ENCODE measurements at regions of chr17 and their contacts with region 1.

Region 1: DNA sequence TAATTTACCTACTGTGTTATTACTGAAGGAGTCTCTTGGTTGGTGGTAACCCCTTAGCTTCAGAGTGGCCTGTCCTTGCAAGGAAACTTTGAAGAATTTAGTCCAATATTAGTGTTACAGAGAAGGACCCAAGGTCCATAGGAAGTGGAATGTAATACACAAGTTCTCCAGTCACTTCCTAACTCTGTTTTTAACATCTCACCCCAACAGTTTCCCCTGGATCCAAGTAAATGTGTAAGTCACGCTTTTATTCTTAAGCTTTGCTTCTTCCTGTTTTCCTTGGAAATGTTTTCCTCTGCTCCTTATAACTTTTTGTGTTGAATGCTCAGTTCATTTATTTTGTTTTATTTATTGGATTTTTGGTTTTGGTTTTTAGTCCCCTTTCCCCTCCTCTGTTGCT is 25.9 kb upstream of the RPRML start:
- DNase-seq: no peak
- ATAC-seq: no peak
- H3K4me3 ChIP-seq: no peak overlapping the region
- H3K4me3 Mint-ChIP-seq: no peak overlapping the region
- H3K27ac ChIP-seq: no peak overlapping the region
- H3K27ac Mint-ChIP-seq: no peak overlapping the region
- H3K4me1 ChIP-seq: no peaks in the 10 kb centered on the region
- H3K4me1 Mint-ChIP-seq: peaks cover 0 to 10% (median 6%) of the 10 kb centered on the region in 7 donors
- H3K27me3 ChIP-seq: no peaks in the 10 kb centered on the region
- H3K27me3 Mint-ChIP-seq: no peaks in the 10 kb centered on the region

Region 2: DNA sequence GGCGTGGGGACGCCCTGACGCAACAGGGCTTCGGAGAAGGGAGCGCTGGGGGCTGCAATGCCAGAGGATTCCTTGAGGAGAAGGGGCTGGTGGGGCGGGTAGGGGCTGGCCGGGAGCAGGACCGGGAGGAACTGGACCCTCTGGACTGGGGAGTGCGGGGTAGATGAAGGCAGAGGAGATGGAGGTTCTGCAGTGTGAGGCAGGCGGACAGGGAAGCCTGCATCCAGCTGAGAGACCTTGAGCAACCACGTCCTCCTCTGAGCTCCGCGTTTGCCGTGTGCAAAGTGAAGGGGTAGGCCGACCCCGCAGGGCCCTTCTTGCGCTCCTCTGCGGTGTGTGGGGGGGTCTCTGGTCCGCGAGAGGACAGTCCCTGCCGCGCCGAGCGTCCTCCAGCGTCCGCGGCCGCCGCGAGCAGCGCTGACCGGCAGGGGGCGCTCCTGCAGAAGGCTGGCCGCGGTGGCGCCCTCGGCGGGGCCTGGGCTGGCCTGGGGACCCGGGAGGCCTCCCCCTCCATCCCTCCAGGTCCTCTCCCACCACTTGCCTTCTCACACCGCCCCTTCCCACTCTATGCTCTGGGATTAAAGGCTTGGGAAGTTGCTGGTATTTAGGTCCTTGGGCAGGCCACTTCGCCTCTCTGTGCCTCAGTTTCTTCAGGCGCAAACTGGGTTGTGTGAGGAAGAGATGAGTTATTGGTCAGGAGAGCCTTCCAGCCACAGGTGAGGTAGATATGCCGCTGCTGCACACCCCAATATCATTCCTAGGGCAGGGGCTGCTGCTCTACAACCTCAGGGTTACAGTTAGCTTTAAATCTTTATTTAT is 163.1 kb before region 1 on chr17:
- CTCF ChIA-PET with region 1: no interaction called
- POLR2A ChIA-PET with region 1: no interaction called
- intact Hi-C with region 1: loop called (anchors 5 kb)
- DNase-seq: peak in 2 of 9 donors; percentile 26 to 45
- ATAC-seq: peak; percentile 55
- H3K4me3 ChIP-seq: no peak overlapping the region
- H3K4me3 Mint-ChIP-seq: no peak overlapping the region
- H3K27ac ChIP-seq: no peak overlapping the region
- H3K27ac Mint-ChIP-seq: no peak overlapping the region
- H3K4me1 ChIP-seq: no peaks in the 10 kb centered on the region
- H3K4me1 Mint-ChIP-seq: peaks cover 0 to 8% (median 4%) of the 10 kb centered on the region in 7 donors
- H3K27me3 ChIP-seq: peaks cover 0 to 14% of the 10 kb centered on the region in 2 donors
- H3K27me3 Mint-ChIP-seq: peaks cover 37 to 66% (median 45%) of the 10 kb centered on the region in 5 donors

Region 3: GRCh38 chr17:46889992-46890564 is 114.8 kb before region 1 on chr17:
- CTCF ChIA-PET with region 1: no interaction called
- POLR2A ChIA-PET with region 1: no interaction called
- intact Hi-C with region 1: no loop called
- DNase-seq: no peak
- ATAC-seq: no peak
- H3K4me3 ChIP-seq: no peak overlapping the region
- H3K4me3 Mint-ChIP-seq: no peak overlapping the region
- H3K27ac ChIP-seq: no peak overlapping the region
- H3K27ac Mint-ChIP-seq: no peak overlapping the region
- H3K4me1 ChIP-seq: no peaks in the 10 kb centered on the region
- H3K4me1 Mint-ChIP-seq: peaks cover 0 to 2% (median 0%) of the 10 kb centered on the region in 7 donors
- H3K27me3 ChIP-seq: no peaks in the 10 kb centered on the region
- H3K27me3 Mint-ChIP-seq: peaks cover 5 to 32% (median 11%) of the 10 kb centered on the region in 5 donors

Region 4: DNA sequence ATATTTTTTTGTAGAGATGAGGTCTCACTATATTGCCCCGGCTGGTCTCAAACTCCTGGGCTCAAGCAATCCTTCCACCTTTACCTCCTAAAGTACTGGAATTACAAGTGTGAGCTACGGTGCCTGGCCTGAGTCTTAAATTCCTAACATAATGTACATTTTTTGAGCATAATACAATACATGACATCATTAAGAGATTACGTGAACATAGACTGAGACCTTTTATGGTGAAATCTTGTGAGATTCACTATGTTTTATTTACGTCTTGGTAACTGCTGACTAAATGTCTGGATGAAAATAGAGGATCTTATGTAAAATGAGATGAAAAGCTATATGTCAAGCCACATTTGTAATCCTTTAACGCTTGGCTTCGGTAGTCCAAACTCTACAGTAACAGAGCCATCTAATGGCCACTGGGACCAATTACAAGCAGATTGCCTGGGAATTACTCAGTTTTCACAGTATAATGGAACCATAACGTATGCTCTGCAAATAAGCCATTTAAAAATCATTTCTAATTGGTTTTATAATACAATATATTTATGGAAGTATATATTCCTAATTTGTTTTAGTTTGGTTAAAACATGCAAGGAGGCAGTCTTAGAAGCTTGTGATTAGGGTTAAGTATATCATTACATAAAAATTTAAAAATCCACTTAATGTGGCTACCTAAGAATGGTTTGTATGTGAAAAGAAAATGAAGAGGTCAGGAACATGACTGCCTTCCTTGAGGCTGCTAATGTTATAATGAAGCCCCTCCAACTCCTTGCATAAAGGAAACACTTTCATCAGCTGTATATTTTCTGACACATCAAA is 310.8 kb after region 1 on chr17:
- CTCF ChIA-PET with region 1: no interaction called
- POLR2A ChIA-PET with region 1: no interaction called
- intact Hi-C with region 1: loop called in 1 of 2 experiments (anchors 5 kb)
- DNase-seq: peak in 7 of 9 donors; percentile 30 to 56 (median 48)
- ATAC-seq: peak; percentile 90
- H3K4me3 ChIP-seq: no peak overlapping the region
- H3K4me3 Mint-ChIP-seq: no peak overlapping the region
- H3K27ac ChIP-seq: no peak overlapping the region
- H3K27ac Mint-ChIP-seq: no peak overlapping the region
- H3K4me1 ChIP-seq: no peaks in the 10 kb centered on the region
- H3K4me1 Mint-ChIP-seq: peaks cover 0 to 3% (median 0%) of the 10 kb centered on the region in 7 donors
- H3K27me3 ChIP-seq: no peaks in the 10 kb centered on the region
- H3K27me3 Mint-ChIP-seq: peaks cover 0 to 14% (median 0%) of the 10 kb centered on the region in 5 donors